Head of caudate nucleus (tissue), 42 donors: ENCODE measurements at regions of chr1 and their contacts with region 1.

Region 1: GRCh38 chr1:25247024-25247828 is at the start of gene RSRP1:
- DNase-seq: peak; percentile 97 to 100 (median 99)

Region 2: GRCh38 chr1:25430666-25431505 is 183.7 kb after region 1 on chr1 and contains the start of gene MACO1:
- intact Hi-C with region 1: loop called (anchors 5 kb)
- DNase-seq: peak; percentile 98 to 100 (median 99)